Pancreas (tissue), 10 donors: ENCODE measurements at regions of chr19 and their contacts with region 1.

Region 1: GRCh38 chr19:49676690-49677231 is 310 bp upstream of the PRMT1 start:
- DNase-seq: peak; percentile 95 to 100 (median 100)
- ATAC-seq: peak; percentile 76 to 84 (median 80)
- H3K4me3 ChIP-seq: peak overlapping the region; percentile 87 to 99 (median 94)
- H3K27ac ChIP-seq: peak overlapping the region; percentile 89 to 95 (median 92)
- H3K4me1 ChIP-seq: peaks cover 5 to 25% (median 17%) of the 10 kb centered on the region in 3 donors
- H3K27me3 ChIP-seq: no peaks in the 10 kb centered on the region
- CTCF ChIP-seq: no peak

Region 2: GRCh38 chr19:49533551-49534488 is 142.9 kb before region 1 on chr19:
- intact Hi-C with region 1: no loop called
- DNase-seq: peak; percentile 68 to 94 (median 86)
- ATAC-seq: peak; percentile 93 to 97 (median 96)
- H3K4me3 ChIP-seq: peak overlapping the region; percentile 32 to 67 (median 37)
- H3K27ac ChIP-seq: no peak overlapping the region
- H3K4me1 ChIP-seq: no peaks in the 10 kb centered on the region
- H3K27me3 ChIP-seq: no peaks in the 10 kb centered on the region
- CTCF ChIP-seq: peak in 3 of 4 donors; percentile 11 to 25 (median 19)

Region 3: DNA sequence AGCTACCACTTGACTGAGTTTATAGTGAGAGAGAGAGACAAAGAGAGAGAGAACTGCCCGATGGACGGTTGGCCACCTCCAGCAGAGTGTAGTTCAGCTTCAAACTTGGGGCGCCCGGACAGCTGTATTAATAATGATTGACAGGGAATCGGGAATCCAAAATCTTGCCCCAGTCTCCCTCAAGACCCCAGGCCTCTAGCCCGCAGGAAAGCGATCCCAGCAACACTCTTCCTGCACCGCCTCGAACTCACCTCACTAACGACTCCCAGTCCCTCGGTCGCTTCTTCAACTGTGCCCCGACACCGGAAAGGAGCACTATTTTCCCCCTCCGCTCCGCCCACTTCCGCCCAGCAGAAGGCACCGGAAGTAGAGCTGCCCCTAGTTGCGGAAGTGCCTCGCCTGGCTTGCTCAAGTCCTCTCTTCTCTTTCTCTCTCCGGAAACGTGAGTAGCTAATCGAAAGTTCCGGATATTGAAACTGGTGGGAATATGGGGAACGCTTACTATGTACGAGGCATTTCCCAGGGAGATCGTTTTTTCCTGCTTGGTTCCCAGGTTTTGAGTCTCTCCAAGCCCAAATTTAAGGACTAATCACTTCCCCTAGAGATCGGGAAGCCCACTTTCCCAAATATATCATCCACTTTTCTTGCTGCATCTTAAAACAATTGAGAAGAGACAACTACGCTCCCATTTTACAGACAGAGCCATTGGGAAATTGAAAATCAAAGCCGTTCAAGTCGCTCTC is 96.3 kb before region 1 on chr19 and contains the start of gene NOSIP:
- intact Hi-C with region 1: loop called in 1 of 3 experiments (anchors 10 kb)
- DNase-seq: peak; percentile 88 to 97 (median 95)
- ATAC-seq: peak; percentile 97 to 98 (median 98)
- H3K4me3 ChIP-seq: peak within 1 kb of the TSS; percentile 47 to 71 (median 62)
- H3K27ac ChIP-seq: peak within 1 kb of the TSS; percentile 45 to 71 (median 60)
- H3K4me1 ChIP-seq: peaks cover 9 to 12% (median 11%) of the 10 kb centered on the region in 3 donors
- H3K27me3 ChIP-seq: no peaks in the 10 kb centered on the region
- CTCF ChIP-seq: no peak
- total RNA-seq, gene NOSIP: 40.5 to 76.3 (median 52.1) TPM

Region 4: GRCh38 chr19:49631014-49631588 is 45.7 kb before region 1 on chr19:
- intact Hi-C with region 1: no loop called
- DNase-seq: peak in 2 of 6 donors; percentile 30 to 34
- ATAC-seq: peak; percentile 49 to 67 (median 62)
- H3K4me3 ChIP-seq: no peak overlapping the region
- H3K27ac ChIP-seq: peak overlapping the region in 2 of 4 donors; percentile 34 to 63
- H3K4me1 ChIP-seq: peaks cover 0 to 12% (median 5%) of the 10 kb centered on the region in 3 donors
- H3K27me3 ChIP-seq: no peaks in the 10 kb centered on the region
- CTCF ChIP-seq: no peak

Region 5: DNA sequence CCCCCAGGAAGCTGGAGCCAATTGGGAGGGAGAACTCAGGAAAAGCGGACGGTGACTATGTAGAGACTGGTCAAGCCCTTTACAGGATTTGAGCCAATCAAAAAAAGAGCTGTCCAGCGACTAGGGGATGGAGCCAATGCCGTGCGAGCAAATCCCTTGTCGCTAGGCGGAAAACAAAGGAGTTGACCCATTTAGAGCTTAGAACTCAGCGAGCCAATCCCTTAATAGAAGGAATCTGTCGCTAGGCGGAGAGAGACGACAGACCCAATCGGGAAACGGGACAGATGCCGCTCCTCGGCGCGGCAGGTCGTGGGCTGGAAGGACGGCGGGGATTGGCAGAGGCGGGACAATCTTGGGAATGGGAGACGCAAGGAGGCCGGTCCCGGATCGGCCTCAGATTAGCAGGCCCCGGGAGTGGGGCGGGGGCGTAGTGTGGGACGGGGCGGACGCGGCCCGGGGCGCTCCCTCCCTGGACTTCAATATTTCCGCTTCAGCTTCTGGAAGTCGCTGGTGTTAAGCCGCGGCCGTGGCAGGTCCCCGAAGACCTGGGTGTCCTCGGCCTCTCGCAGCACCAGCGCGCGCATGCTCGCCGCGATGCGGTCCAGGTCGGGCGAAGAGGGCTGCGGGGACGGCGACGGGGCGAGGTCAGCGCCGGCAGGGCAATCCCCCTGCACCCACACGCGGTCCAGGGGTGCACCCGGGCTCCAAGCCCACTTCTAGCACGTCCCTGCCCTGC is 192.8 kb after region 1 on chr19:
- intact Hi-C with region 1: no loop called
- DNase-seq: peak; percentile 93 to 98 (median 96)
- ATAC-seq: peak; percentile 70 to 78 (median 78)
- H3K4me3 ChIP-seq: peak overlapping the region; percentile 28 to 41 (median 40)
- H3K27ac ChIP-seq: peak overlapping the region; percentile 36 to 94 (median 86)
- H3K4me1 ChIP-seq: peaks cover 16 to 35% (median 25%) of the 10 kb centered on the region in 3 donors
- H3K27me3 ChIP-seq: no peaks in the 10 kb centered on the region
- CTCF ChIP-seq: peak in 1 of 4 donors; percentile 8